Mammary epithelial cell (primary cell): ENCODE measurements at regions of chr16 and their contacts with region 1.

Region 1: GRCh38 chr16:65117811-65118448 is 3.9 kb downstream of the CDH11 start:
- DNase-seq: peak; percentile 46
- H3K4me3 ChIP-seq: no peak overlapping the region
- H3K27ac ChIP-seq: no peak overlapping the region
- H3K4me1 ChIP-seq: peaks cover 25% of the 10 kb centered on the region
- H3K27me3 ChIP-seq: no peaks in the 10 kb centered on the region
- CTCF ChIP-seq: peak; percentile 95 to 98

Region 2: DNA sequence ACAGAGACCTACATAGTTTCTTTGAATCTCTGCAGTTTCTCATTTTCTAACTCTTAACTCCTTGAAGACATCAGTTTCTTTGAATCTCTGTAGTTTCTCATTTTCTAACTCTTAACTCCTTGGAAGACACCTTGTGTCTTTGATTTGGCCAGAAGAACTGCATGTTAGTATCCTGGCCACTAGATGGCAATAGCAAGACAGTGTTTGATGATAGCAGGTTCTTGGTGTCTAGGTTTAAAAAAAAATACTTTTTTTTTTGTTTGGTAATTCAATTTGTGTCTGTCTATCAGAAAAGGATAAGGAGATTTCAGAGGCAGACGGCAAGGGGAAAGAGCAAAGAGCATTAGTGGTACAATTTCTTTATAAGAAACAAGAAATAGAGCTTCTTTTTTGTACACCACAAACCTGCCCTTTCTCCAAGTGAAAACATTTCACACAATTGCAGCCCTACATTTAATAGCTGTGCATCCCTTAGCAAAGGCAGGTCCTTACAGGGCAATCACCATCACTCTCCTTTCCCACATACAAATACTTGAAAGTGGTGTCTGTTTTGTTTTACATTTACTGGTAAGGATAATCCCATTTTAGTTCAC is 1756.8 kb before region 1 on chr16:
- CTCF ChIA-PET with region 1: no interaction called
- dilution Hi-C with region 1: no loop called
- in situ Hi-C with region 1: loop called in 1 of 2 experiments (anchors 25 kb)
- intact Hi-C with region 1: loop called (anchors 2 kb)
- DNase-seq: peak; percentile 28
- H3K4me3 ChIP-seq: no peak overlapping the region
- H3K27ac ChIP-seq: no peak overlapping the region
- H3K4me1 ChIP-seq: no peaks in the 10 kb centered on the region
- H3K27me3 ChIP-seq: no peaks in the 10 kb centered on the region
- CTCF ChIP-seq: peak; percentile 82 to 85

Region 3: DNA sequence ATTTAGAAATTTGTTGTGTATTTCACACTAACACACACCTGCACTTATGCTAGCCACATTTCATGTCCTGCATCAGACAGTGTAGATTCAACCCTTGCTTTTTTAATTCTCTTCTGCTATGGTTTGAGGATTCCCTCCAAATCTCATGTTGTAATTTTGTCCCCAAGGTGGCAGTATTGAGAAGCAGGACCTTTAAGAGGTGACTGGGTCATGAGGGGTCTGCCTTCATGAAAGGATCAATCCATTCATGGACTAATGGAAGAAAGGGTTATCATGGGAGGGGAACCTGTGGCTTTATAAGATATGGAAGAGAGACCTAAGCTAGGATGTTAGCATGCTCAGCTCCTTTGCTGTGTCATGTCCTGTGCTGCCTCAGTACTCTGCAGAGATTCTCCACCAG is 1028.2 kb before region 1 on chr16:
- CTCF ChIA-PET with region 1: no interaction called
- dilution Hi-C with region 1: no loop called
- in situ Hi-C with region 1: no loop called
- intact Hi-C with region 1: loop called (anchors 2 kb)
- DNase-seq: peak; percentile 7
- H3K4me3 ChIP-seq: no peak overlapping the region
- H3K27ac ChIP-seq: no peak overlapping the region
- H3K4me1 ChIP-seq: no peaks in the 10 kb centered on the region
- H3K27me3 ChIP-seq: no peaks in the 10 kb centered on the region
- CTCF ChIP-seq: peak; percentile 19 to 52

Region 4: GRCh38 chr16:64428463-64429113 is 689.3 kb before region 1 on chr16:
- CTCF ChIA-PET with region 1: no interaction called
- dilution Hi-C with region 1: no loop called
- in situ Hi-C with region 1: no loop called
- intact Hi-C with region 1: no loop called
- DNase-seq: peak; percentile 26
- H3K4me3 ChIP-seq: no peak overlapping the region
- H3K27ac ChIP-seq: no peak overlapping the region
- H3K4me1 ChIP-seq: no peaks in the 10 kb centered on the region
- H3K27me3 ChIP-seq: no peaks in the 10 kb centered on the region
- CTCF ChIP-seq: no peak

Region 5: DNA sequence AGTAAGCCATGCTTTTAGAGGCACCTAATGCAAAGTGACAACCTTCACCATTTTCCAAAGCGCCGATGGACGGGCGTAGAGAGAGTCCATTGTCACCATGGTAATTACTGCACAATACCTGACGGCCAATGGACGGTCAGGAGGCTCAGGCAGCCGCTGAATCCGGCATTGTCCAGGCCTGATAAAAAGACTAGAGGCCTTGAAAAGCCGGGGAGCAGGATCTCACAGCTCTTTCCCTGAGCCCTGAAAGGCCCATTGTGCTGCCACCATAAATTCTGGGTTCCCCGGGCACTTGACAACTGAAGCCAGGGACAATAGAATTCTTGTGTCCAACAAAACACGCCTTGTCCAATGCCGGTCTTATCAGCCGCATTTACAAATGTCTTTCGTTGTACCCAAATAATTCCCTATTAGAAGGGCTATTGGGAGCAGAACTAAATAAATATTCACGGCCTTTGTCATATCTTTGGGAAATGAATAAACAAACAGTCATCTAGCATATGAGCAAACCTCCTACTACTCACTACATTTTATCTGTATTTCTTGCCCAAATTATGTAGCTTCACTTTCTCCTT is 58.4 kb before region 1 on chr16:
- CTCF ChIA-PET with region 1: no interaction called
- dilution Hi-C with region 1: no loop called
- in situ Hi-C with region 1: no loop called
- intact Hi-C with region 1: no loop called
- DNase-seq: no peak
- H3K4me3 ChIP-seq: no peak overlapping the region
- H3K27ac ChIP-seq: no peak overlapping the region
- H3K4me1 ChIP-seq: no peaks in the 10 kb centered on the region
- H3K27me3 ChIP-seq: no peaks in the 10 kb centered on the region
- CTCF ChIP-seq: no peak

Region 6: GRCh38 chr16:65070831-65071432 is 47.0 kb before region 1 on chr16:
- CTCF ChIA-PET with region 1: no interaction called
- dilution Hi-C with region 1: no loop called
- in situ Hi-C with region 1: no loop called
- intact Hi-C with region 1: no loop called
- DNase-seq: peak; percentile 11
- H3K4me3 ChIP-seq: no peak overlapping the region
- H3K27ac ChIP-seq: peak overlapping the region; percentile 8
- H3K4me1 ChIP-seq: peaks cover 9% of the 10 kb centered on the region
- H3K27me3 ChIP-seq: no peaks in the 10 kb centered on the region
- CTCF ChIP-seq: no peak

Region 7: DNA sequence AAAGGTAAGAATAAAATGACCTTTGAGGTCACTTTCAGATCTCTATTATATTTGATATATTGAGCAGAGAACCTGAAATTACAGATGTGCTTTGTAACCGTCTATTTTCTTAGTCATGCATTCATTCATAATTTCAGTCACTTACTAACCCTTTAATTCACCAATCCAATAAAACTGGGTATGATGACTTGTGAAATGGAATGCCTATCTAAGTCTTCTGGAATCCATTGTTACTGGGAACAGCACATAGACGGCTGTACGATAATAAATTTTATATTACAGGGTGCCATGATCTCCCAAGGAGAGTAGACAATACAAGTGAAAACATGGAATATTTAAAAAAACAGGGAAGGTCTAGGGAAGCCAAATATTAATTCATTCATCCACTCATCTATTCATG is 19.0 kb before region 1 on chr16:
- CTCF ChIA-PET with region 1: no interaction called
- dilution Hi-C with region 1: no loop called
- in situ Hi-C with region 1: no loop called
- intact Hi-C with region 1: no loop called
- DNase-seq: no peak
- H3K4me3 ChIP-seq: no peak overlapping the region
- H3K27ac ChIP-seq: no peak overlapping the region
- H3K4me1 ChIP-seq: peaks cover 11% of the 10 kb centered on the region
- H3K27me3 ChIP-seq: no peaks in the 10 kb centered on the region
- CTCF ChIP-seq: no peak

Region 8: GRCh38 chr16:65658349-65658748 is 540.4 kb after region 1 on chr16:
- CTCF ChIA-PET with region 1: no interaction called
- dilution Hi-C with region 1: no loop called
- in situ Hi-C with region 1: no loop called
- intact Hi-C with region 1: loop called (anchors 10 kb)
- DNase-seq: peak; percentile 95
- H3K4me3 ChIP-seq: no peak overlapping the region
- H3K27ac ChIP-seq: peak overlapping the region; percentile 69
- H3K4me1 ChIP-seq: peaks cover 38% of the 10 kb centered on the region
- H3K27me3 ChIP-seq: no peaks in the 10 kb centered on the region
- CTCF ChIP-seq: no peak

Region 9: GRCh38 chr16:66026211-66026610 is 908.3 kb after region 1 on chr16:
- CTCF ChIA-PET with region 1: no interaction called
- dilution Hi-C with region 1: no loop called
- in situ Hi-C with region 1: no loop called
- intact Hi-C with region 1: loop called (anchors 5 kb)
- DNase-seq: no peak
- H3K4me3 ChIP-seq: no peak overlapping the region
- H3K27ac ChIP-seq: no peak overlapping the region
- H3K4me1 ChIP-seq: peaks cover 11% of the 10 kb centered on the region
- H3K27me3 ChIP-seq: no peaks in the 10 kb centered on the region
- CTCF ChIP-seq: peak; percentile 38 to 62